Sigmoid colon (tissue), 7 donors: ENCODE measurements at regions of chr15 and their contacts with region 1.

Region 1: GRCh38 chr15:39171944-39172368 is 408.9 kb upstream of the THBS1 start:
- DNase-seq: peak; percentile 82
- H3K4me3 ChIP-seq: no peak overlapping the region
- H3K27ac ChIP-seq: peak overlapping the region; percentile 73 to 78 (median 73)
- H3K4me1 ChIP-seq: peaks cover 0 to 39% (median 31%) of the 10 kb centered on the region in 4 donors
- H3K27me3 ChIP-seq: no peaks in the 10 kb centered on the region
- CTCF ChIP-seq: peak in 3 of 4 experiments; percentile 16 to 45 (median 22)
- EP300 ChIP-seq: no peak
- POLR2A ChIP-seq: no peak

Region 2: DNA sequence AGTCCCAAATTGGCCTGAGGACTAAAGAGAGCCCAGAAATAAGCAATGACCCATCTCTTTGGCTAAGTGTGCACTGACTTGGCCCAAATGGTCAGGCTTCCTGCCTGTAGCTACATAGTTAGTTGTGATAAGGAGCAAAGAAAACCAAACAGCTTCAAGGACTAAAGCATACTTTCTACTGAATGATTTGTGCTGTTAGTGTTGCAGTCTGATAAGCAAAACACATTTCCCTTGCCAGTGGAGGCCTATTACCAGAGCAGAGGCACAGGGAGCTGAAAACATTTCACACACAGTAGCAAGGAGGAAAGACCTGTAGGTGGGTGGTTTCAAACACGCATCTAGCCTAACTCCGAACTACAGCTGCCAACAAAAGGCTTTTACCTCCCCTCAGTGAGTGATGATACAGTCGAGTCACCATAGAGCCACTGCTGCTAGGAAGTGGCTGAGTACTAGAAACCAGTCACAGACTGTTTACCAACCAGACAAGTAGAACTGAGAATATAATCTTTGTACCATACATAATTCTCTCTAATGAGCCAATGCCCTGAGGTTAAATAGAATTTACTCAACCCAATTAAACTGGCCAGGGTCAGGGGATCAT is 186.6 kb after region 1 on chr15:
- intact Hi-C with region 1: loop called (anchors 5 kb)
- DNase-seq: peak; percentile 77
- H3K4me3 ChIP-seq: no peak overlapping the region
- H3K27ac ChIP-seq: peak overlapping the region; percentile 61 to 76 (median 65)
- H3K4me1 ChIP-seq: peaks cover 0 to 29% (median 17%) of the 10 kb centered on the region in 4 donors
- H3K27me3 ChIP-seq: no peaks in the 10 kb centered on the region
- CTCF ChIP-seq: no peak
- EP300 ChIP-seq: no peak
- POLR2A ChIP-seq: no peak

Region 3: GRCh38 chr15:39444735-39445470 is 272.9 kb after region 1 on chr15:
- intact Hi-C with region 1: loop called (anchors 5 kb)
- DNase-seq: peak; percentile 75
- H3K4me3 ChIP-seq: no peak overlapping the region
- H3K27ac ChIP-seq: peak overlapping the region in 3 of 4 donors; percentile 3 to 56 (median 46)
- H3K4me1 ChIP-seq: peaks cover 0 to 11% (median 4%) of the 10 kb centered on the region in 4 donors
- H3K27me3 ChIP-seq: no peaks in the 10 kb centered on the region
- CTCF ChIP-seq: no peak
- EP300 ChIP-seq: no peak
- POLR2A ChIP-seq: no peak

Region 4: DNA sequence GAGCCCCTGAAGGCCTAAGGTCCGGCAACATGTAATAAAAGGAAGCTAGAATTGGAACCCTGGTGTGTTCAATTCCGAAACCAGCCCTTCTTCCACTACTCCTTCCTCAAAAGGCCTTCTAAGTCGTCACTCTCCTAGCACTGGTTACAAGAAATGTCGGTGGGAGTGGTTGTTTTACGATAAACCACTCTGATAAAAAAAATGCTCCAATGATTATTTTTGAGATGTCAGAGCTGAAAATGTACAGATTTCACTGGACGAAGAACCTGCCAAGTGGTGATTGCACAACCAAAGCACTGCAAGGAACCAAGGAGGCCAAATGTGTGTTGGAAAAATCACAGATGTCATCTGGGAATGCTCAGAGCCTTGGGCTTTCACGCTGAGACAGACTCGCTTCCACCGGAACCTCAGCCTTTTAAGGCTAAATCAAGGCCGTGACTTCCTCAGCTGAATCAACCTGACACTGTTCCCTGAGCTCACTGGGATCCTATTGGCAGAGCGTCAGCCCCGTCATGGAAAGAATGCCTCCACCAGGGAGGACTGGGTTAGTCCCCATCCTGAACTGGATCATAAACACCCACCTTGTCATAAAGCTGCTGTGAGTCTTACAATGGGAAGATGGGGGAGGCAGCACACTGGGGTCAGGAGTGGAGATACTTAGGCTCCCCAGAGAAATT is 300.8 kb after region 1 on chr15:
- intact Hi-C with region 1: loop called (anchors 10 kb)
- DNase-seq: peak; percentile 99
- H3K4me3 ChIP-seq: no peak overlapping the region
- H3K27ac ChIP-seq: peak overlapping the region; percentile 79 to 95 (median 85)
- H3K4me1 ChIP-seq: peaks cover 0 to 46% (median 30%) of the 10 kb centered on the region in 4 donors
- H3K27me3 ChIP-seq: no peaks in the 10 kb centered on the region
- CTCF ChIP-seq: no peak
- EP300 ChIP-seq: peak; percentile 95 to 99 (median 98)
- POLR2A ChIP-seq: no peak

Region 5: GRCh38 chr15:39756806-39757522 is 585.0 kb after region 1 on chr15:
- intact Hi-C with region 1: loop called (anchors 10 kb)
- DNase-seq: no peak
- H3K4me3 ChIP-seq: no peak overlapping the region
- H3K27ac ChIP-seq: no peak overlapping the region
- H3K4me1 ChIP-seq: no peaks in the 10 kb centered on the region
- H3K27me3 ChIP-seq: no peaks in the 10 kb centered on the region
- CTCF ChIP-seq: peak; percentile 27 to 88 (median 66)
- EP300 ChIP-seq: no peak
- POLR2A ChIP-seq: no peak